ENCODE measurements at regions of chr3 and their contacts with region 1.

Region 1: DNA sequence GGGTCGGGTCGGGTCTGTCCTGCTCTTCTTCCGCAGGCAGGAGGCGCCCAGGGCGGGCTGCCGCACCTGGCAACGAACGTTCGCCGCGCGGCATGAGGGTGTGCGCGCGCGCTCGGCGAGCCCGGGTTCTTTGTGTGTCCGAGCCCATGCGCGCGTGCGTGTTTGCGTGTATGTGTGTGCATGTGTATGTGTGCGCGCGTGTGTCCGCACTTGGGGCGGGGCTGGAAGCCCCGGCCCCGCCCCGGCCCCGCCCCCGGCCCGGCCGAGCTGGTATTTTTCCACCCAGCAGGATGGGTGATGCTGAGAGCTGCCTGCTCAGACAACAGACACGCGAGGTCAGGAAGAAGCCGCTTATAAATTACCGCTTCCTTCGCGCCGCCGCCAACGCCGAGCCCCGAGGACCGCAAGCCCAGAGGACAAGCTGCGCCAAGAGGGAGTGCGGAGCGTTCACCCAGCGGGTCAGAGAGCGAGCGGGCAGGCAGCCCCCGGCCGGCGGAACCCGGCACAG is at the start of gene SLC6A6:
- DNase-seq: peak; percentile 96
- H3K4me3 ChIP-seq: peak within 1 kb of the TSS; percentile 51 to 83 (median 63)
- H3K27ac ChIP-seq: peak within 1 kb of the TSS; percentile 67
- H3K4me1 ChIP-seq: peaks cover 19% of the 10 kb centered on the region
- H3K27me3 ChIP-seq: no peaks in the 10 kb centered on the region
- CTCF ChIP-seq: peak; percentile 25 to 66
- total RNA-seq, gene SLC6A6: 14.8 to 17.7 TPM

Region 2: GRCh38 chr3:14289590-14290461 is 112.5 kb before region 1 on chr3:
- CTCF ChIA-PET with region 1: no interaction called
- dilution Hi-C with region 1: loop called (anchors 5 kb)
- in situ Hi-C with region 1: no loop called
- intact Hi-C with region 1: no loop called
- DNase-seq: peak; percentile 38
- H3K4me3 ChIP-seq: no peak overlapping the region
- H3K27ac ChIP-seq: no peak overlapping the region
- H3K4me1 ChIP-seq: no peaks in the 10 kb centered on the region
- H3K27me3 ChIP-seq: no peaks in the 10 kb centered on the region
- CTCF ChIP-seq: no peak

Region 3: DNA sequence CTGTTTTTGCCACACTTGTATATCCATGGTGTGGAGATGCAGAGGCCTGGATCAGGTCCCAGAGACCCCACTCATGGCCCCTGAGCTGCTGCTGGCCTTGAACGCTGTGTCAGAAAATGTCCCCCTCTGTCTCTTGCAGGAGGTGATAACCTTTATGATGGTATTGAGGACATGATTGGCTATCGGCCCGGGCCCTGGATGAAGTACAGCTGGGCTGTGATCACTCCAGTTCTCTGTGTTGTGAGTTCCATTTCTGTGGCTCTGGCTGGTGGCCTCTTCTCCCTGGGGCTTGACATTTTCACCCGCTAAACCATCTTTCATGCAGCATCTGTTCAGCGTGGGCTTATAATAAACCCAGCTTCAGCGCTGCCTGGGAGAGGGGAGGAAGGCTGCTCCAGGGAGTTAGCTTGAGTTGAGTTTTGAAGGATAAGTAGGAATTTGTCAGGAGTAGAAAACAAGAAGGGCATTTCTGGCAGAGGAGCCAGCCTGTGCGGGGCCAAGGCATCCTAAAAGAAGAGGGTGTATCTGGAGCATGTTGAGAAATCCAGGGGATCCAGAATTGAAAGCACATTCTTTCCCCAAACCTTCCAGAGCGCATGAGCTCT is 76.7 kb after region 1 on chr3:
- CTCF ChIA-PET with region 1: no interaction called
- dilution Hi-C with region 1: loop called (anchors 5 kb)
- in situ Hi-C with region 1: no loop called
- intact Hi-C with region 1: no loop called
- DNase-seq: no peak
- H3K4me3 ChIP-seq: no peak overlapping the region
- H3K27ac ChIP-seq: no peak overlapping the region
- H3K4me1 ChIP-seq: peaks cover 7% of the 10 kb centered on the region
- H3K27me3 ChIP-seq: no peaks in the 10 kb centered on the region
- CTCF ChIP-seq: no peak

Measured in mammary epithelial cell (primary cell).